CD4-positive, alpha-beta T cell (primary cell): ENCODE measurements at regions of chr3 and their contacts with region 1.

Region 1: DNA sequence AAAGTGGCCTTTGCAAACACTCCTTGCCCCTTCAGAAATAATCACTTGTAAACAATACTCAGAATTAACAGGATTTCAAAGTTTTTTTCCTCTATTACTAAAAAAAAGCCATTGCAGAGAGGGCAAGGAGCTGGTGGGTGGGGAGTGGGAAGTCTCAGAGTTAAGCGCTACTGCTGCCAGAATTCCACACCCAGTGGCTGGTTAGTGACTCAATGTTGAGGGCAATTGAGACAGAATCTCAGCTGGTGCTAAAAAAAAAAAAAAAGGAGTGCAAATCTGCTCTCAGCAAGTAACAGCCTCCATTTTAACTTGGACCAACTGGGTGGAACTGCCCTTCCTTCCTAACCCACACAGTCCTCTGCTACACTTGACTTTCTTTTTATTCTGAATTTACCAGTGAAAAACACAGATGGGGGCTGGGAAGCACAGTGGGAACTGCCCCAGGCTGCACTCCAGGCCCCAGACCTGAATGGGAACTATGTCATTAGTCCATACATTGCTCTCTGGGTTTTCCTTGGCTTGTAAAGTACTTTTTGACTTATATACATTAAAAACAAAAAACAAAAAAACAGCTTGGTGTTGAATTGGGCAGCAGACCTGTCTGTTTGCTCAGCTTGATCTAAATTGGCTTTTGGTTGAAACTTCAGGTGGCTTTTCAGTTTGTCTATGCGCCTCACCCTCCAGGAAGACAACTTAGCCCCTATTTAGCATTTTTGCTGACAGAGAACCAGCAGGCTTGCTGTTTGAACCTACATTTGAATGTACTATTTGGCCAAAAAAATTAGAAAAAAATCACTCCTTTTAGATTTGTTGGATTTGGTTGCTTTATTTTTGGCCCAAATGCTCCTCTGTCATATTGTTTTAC is 357.8 kb upstream of the TBL1XR1 start:
- DNase-seq: peak in 3 of 14 experiments; percentile 9 to 32 (median 17)
- ATAC-seq: no peak
- H3K4me3 ChIP-seq: no peak overlapping the region
- H3K4me3 Mint-ChIP-seq: peak overlapping the region; percentile 13
- H3K27ac ChIP-seq: no peak overlapping the region
- H3K27ac Mint-ChIP-seq: peak overlapping the region; percentile 64
- H3K4me1 ChIP-seq: peaks cover 35% of the 10 kb centered on the region
- H3K4me1 Mint-ChIP-seq: peaks cover 66% of the 10 kb centered on the region
- H3K27me3 ChIP-seq: no peaks in the 10 kb centered on the region
- H3K27me3 Mint-ChIP-seq: no peaks in the 10 kb centered on the region
- CTCF ChIP-seq: no peak

Region 2: GRCh38 chr3:177538750-177539730 is 16.1 kb before region 1 on chr3:
- CTCF ChIA-PET with region 1: no interaction called
- POLR2A ChIA-PET with region 1: interaction called, 18 read pairs
- intact Hi-C with region 1: no loop called
- DNase-seq: peak in 4 of 14 experiments; percentile 20 to 79 (median 55)
- ATAC-seq: peak; percentile 59
- H3K4me3 ChIP-seq: peak overlapping the region; percentile 19
- H3K4me3 Mint-ChIP-seq: peak overlapping the region; percentile 74
- H3K27ac ChIP-seq: peak overlapping the region; percentile 19 to 31
- H3K27ac Mint-ChIP-seq: peak overlapping the region; percentile 83
- H3K4me1 ChIP-seq: peaks cover 27% of the 10 kb centered on the region
- H3K4me1 Mint-ChIP-seq: peaks cover 65% of the 10 kb centered on the region
- H3K27me3 ChIP-seq: no peaks in the 10 kb centered on the region
- H3K27me3 Mint-ChIP-seq: no peaks in the 10 kb centered on the region
- CTCF ChIP-seq: no peak

Region 3: GRCh38 chr3:177589911-177590381 is 34.8 kb after region 1 on chr3:
- CTCF ChIA-PET with region 1: no interaction called
- POLR2A ChIA-PET with region 1: no interaction called
- intact Hi-C with region 1: loop called in 1 of 2 experiments (anchors 5 kb)
- DNase-seq: no peak
- ATAC-seq: no peak
- H3K4me3 ChIP-seq: no peak overlapping the region
- H3K4me3 Mint-ChIP-seq: no peak overlapping the region
- H3K27ac ChIP-seq: no peak overlapping the region
- H3K27ac Mint-ChIP-seq: no peak overlapping the region
- H3K4me1 ChIP-seq: peaks cover 13% of the 10 kb centered on the region
- H3K4me1 Mint-ChIP-seq: peaks cover 33% of the 10 kb centered on the region
- H3K27me3 ChIP-seq: no peaks in the 10 kb centered on the region
- H3K27me3 Mint-ChIP-seq: no peaks in the 10 kb centered on the region
- CTCF ChIP-seq: no peak